ENCODE measurements at regions of chr11 and their contacts with region 1.

Region 1: GRCh38 chr11:103601225-103601846 is 435.1 kb upstream of the DDI1 start:
- H3K4me3 Mint-ChIP-seq: no peak overlapping the region
- H3K27ac Mint-ChIP-seq: no peak overlapping the region
- H3K4me1 Mint-ChIP-seq: no peaks in the 10 kb centered on the region
- H3K27me3 Mint-ChIP-seq: no peaks in the 10 kb centered on the region

Region 2: DNA sequence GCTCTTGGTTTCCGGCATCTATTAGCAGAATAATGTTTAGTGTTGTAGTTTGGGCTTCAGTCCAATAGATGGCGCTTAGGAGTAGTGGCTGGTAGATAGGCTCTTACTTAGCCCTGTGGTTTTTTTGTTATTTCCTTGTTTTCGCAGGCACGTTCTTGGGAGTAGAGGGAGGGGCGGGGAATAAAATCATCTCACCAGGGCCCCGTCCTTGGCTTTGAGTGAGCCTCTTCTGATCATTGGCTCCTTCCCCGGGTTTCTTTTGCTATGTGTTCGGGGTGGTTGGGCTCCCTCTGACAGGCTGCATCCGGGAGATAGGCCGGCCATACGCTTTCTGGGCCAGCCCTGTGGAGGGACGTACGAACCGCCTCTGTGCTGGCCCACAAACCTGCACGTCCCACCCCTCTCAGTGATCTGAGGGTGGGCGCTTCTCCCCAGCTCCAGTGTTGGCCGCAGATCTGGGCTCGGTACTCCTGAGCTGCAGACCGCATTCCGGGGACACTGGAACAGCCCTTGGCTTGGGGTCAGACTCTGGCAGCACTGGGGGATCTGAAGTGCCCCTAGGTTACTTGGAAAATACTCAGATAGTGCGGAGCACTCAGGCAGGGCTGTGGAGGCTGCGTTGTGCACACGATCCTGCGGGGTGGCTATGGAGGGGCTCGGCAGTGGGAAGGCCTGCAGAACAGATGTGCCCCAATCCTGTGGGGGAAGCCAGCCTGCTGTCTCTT is 275.1 kb before region 1 on chr11:
- intact Hi-C with region 1: loop called (anchors 5 kb)
- H3K4me3 Mint-ChIP-seq: no peak overlapping the region
- H3K27ac Mint-ChIP-seq: no peak overlapping the region
- H3K4me1 Mint-ChIP-seq: peaks cover 11% of the 10 kb centered on the region
- H3K27me3 Mint-ChIP-seq: no peaks in the 10 kb centered on the region

Region 3: DNA sequence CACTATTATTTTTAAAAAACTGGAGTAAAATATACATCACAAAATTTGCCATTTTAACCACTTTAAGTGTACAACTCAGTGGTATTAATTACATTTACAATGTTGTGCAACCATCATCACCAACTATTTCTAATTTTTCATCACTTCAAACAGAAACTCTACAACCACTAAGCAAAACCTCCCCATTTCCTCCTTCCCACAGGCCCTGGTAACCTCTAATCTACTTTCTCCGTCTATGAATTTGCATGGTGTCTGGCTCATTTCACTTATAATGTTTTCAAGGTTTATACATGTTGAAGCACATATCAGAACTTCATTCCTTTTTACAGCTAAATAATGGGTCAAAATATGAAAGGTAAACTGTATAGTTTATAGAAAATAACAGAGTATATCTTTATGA is 459.5 kb after region 1 on chr11:
- intact Hi-C with region 1: no loop called
- H3K4me3 Mint-ChIP-seq: no peak overlapping the region
- H3K27ac Mint-ChIP-seq: no peak overlapping the region
- H3K4me1 Mint-ChIP-seq: peaks cover 41% of the 10 kb centered on the region
- H3K27me3 Mint-ChIP-seq: no peaks in the 10 kb centered on the region